ENCODE measurements at regions of chr3 and their contacts with region 1.

Region 1: DNA sequence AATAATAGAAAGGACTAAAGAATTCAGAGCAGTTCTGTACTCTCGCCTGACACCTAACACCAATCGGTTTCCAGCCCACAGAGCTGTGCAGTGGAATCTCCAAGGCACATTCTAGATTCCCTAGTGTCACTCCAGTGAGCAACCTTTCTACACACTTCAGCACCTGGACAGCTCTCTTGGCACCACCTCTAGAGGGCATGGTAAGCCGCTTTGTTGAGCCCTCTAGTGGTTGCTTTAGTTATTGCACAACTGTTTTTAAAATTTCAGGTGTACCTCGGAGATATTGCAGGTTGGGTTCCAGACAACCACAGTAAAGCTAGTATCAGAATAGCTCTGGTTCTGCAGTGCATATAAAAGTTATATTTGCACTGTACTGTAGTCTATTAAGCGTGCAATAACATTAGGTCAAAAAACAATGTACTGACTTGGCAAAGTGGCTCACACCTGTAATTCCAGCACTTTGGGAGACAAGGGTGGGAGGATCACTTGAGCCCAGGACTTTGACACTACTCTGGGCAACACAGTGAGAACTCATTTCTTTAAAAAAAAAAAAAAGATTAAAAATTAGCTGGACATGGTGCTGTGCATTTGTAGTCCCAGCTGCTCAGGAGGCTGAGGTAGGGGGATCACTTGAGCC is 26.5 kb upstream of the ERC2 start:
- DNase-seq: peak; percentile 74
- H3K4me3 ChIP-seq: no peak overlapping the region
- H3K27ac ChIP-seq: no peak overlapping the region
- H3K4me1 ChIP-seq: no peaks in the 10 kb centered on the region
- H3K27me3 ChIP-seq: no peaks in the 10 kb centered on the region
- CTCF ChIP-seq: peak; percentile 83 to 98 (median 88)
- POLR2A ChIP-seq: no peak

Region 2: DNA sequence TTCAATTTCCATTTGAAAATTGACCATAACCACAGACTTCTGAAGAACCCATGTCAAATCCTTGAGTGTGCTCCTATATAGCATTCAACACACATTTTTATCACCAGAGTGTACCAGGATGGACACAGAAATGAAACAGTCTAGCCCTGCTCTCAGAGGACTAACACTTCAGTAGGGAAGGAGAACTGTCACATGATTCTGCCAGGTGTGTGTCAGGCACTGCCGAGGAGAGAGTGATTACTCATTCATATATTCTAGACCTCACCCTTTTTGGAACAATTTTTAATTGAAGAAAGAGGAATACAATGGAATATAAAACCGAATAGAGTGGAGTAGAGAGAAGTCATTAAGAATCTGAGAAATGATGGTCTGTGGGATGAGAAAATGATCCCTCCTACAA is 152.3 kb before region 1 on chr3:
- intact Hi-C with region 1: loop called (anchors 5 kb)
- DNase-seq: no peak
- H3K4me3 ChIP-seq: no peak overlapping the region
- H3K27ac ChIP-seq: no peak overlapping the region
- H3K4me1 ChIP-seq: no peaks in the 10 kb centered on the region
- H3K27me3 ChIP-seq: no peaks in the 10 kb centered on the region
- CTCF ChIP-seq: no peak
- POLR2A ChIP-seq: no peak

Region 3: GRCh38 chr3:56525291-56525690 is 30.5 kb after region 1 on chr3:
- intact Hi-C with region 1: no loop called
- DNase-seq: no peak
- H3K4me3 ChIP-seq: no peak overlapping the region
- H3K27ac ChIP-seq: no peak overlapping the region
- H3K4me1 ChIP-seq: no peaks in the 10 kb centered on the region
- H3K27me3 ChIP-seq: no peaks in the 10 kb centered on the region
- CTCF ChIP-seq: no peak
- POLR2A ChIP-seq: no peak

Region 4: DNA sequence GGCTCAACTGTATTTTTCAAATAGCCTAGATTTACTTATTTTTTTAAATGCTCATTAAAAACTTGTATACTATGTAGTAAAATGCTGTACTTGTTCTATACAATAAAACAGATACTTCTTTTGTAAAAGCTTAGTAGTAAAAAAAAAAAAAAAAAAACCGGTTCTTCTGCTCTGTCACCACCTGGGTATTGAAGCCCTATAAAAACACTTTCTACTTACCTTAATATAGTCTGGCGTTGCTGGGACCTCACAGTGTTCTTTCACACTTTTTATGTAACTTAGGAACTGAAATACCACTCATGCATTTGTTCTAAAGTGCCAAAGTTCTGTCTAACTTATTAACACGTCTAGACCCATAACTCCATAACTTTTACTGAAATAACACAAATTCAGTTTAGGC is 126.9 kb after region 1 on chr3:
- intact Hi-C with region 1: no loop called
- DNase-seq: peak; percentile 14
- H3K4me3 ChIP-seq: no peak overlapping the region
- H3K27ac ChIP-seq: no peak overlapping the region
- H3K4me1 ChIP-seq: peaks cover 4% of the 10 kb centered on the region
- H3K27me3 ChIP-seq: no peaks in the 10 kb centered on the region
- CTCF ChIP-seq: no peak
- POLR2A ChIP-seq: no peak

Region 5: GRCh38 chr3:57046101-57046765 is 551.4 kb after region 1 on chr3:
- intact Hi-C with region 1: no loop called
- DNase-seq: no peak
- H3K4me3 ChIP-seq: no peak overlapping the region
- H3K27ac ChIP-seq: no peak overlapping the region
- H3K4me1 ChIP-seq: no peaks in the 10 kb centered on the region
- H3K27me3 ChIP-seq: no peaks in the 10 kb centered on the region
- CTCF ChIP-seq: no peak
- POLR2A ChIP-seq: no peak

Measured in prostate gland (tissue), 2 donors.